ENCODE measurements at regions of chr4 and their contacts with region 1.

Region 1: GRCh38 chr4:112938461-112939058 is 110.9 kb upstream of the ANK2 start:
- DNase-seq: no peak
- ATAC-seq: peak; percentile 53

Region 2: GRCh38 chr4:112765317-112765975 is 173.1 kb before region 1 on chr4:
- intact Hi-C with region 1: loop called (anchors 10 kb)
- DNase-seq: no peak
- ATAC-seq: peak; percentile 70

Measured in Right ventricle myocardium superior (tissue), 1 donor.